HCT116 (cell line): ENCODE measurements at regions of chr1 and their contacts with region 1.

Region 1: DNA sequence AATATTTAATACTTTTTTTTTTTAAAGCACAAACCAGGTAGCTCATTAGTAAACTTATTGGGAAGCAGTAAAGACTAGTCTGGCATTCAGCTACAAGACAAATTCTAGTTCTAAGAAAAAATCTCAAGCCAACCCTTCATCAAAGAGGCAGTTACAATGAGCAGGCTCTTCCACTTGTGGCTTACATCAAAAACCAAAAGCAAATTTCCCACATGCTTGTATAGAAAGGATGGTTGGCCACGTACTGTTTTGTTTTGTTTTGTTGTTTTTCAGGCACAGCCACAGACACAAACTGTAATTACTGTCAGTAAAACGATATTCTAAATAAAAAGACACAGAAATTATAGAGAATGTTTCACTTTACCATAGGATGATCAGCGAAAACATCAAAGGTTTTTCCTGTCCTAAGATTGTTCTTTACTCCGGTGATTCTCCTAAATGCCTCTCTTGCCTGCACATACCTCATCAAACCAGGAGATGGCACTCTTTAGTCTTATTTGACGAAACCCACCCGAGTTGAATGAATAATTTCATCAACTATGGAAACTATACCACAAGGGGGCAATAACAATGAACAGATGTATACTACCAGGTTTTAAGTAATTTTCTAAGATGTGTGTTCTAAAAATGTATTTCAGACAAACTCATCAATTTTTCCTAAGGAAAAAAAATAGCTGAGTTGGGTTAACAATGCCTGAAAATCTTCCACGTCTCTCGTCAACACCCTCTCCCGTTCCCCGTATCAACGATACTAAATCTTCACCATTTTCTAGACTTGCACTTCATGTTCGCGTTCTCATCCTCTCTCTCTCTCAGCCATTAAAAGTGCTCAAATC is 26.9 kb downstream of the RPL5 start:
- DNase-seq: peak; percentile 67
- ATAC-seq: peak; percentile 93
- H3K4me3 ChIP-seq: no peak overlapping the region
- H3K27ac ChIP-seq: no peak overlapping the region
- H3K4me1 ChIP-seq: no peaks in the 10 kb centered on the region
- H3K27me3 ChIP-seq: no peaks in the 10 kb centered on the region
- CTCF ChIP-seq: peak; percentile 87 to 99 (median 99)
- POLR2A ChIP-seq: no peak
- RAD21 ChIP-seq: peak; percentile 98

Region 2: GRCh38 chr1:92051948-92052347 is 806.8 kb before region 1 on chr1:
- CTCF ChIA-PET with region 1: no interaction called
- POLR2A ChIA-PET with region 1: no interaction called
- RAD21 ChIA-PET with region 1: no interaction called
- intact Hi-C with region 1: no loop called
- DNase-seq: no peak
- ATAC-seq: no peak
- H3K4me3 ChIP-seq: no peak overlapping the region
- H3K27ac ChIP-seq: no peak overlapping the region
- H3K4me1 ChIP-seq: no peaks in the 10 kb centered on the region
- H3K27me3 ChIP-seq: no peaks in the 10 kb centered on the region
- CTCF ChIP-seq: no peak
- POLR2A ChIP-seq: no peak
- RAD21 ChIP-seq: no peak

Region 3: DNA sequence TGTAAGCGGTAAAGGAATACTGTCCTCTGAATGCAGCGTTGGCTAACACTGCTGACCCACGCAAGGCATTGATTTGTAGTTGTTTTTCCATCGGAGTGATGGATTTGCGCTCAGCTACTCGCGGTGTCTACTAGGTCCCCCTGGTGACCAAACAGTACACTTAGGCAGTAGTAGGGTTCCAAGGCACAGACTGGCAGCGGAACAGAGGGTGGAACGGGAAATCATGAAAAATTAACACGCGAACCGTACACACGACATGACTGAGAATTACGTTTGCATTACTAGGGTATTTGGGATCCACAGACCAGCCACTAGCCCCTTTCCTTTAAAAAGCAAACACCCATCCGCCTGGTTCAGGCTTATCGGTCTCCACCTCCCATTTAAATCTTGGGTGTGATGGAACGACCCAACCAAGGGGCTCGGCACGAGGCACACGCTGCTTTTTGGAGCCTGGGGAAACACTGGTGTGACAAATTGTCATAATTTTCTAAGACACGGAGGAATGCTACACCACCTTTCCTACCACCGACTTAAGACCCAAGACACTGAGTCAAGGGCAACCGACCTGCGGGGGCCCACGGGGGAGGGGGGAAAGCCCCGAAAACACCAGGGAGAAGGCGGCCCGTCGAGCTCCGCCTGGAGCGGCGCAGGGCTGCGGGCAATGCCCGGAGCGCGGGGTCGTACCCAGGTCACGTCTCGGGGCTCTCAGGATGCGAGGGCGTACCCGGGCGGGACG is 101.8 kb after region 1 on chr1:
- CTCF ChIA-PET with region 1: interaction called, 21 read pairs
- POLR2A ChIA-PET with region 1: no interaction called
- RAD21 ChIA-PET with region 1: interaction called in 1 of 2 experiments, 4 read pairs
- intact Hi-C with region 1: loop called (anchors 1 kb)
- DNase-seq: peak; percentile 70
- ATAC-seq: peak; percentile 74
- H3K4me3 ChIP-seq: peak overlapping the region; percentile 63 to 71
- H3K27ac ChIP-seq: peak overlapping the region; percentile 66
- H3K4me1 ChIP-seq: peaks cover 0 to 21% of the 10 kb centered on the region in 2 experiments; a peak in 2 of 4 replicates
- H3K27me3 ChIP-seq: no peaks in the 10 kb centered on the region
- CTCF ChIP-seq: peak; percentile 50 to 96 (median 58)
- POLR2A ChIP-seq: no peak
- RAD21 ChIP-seq: peak; percentile 88

Region 4: DNA sequence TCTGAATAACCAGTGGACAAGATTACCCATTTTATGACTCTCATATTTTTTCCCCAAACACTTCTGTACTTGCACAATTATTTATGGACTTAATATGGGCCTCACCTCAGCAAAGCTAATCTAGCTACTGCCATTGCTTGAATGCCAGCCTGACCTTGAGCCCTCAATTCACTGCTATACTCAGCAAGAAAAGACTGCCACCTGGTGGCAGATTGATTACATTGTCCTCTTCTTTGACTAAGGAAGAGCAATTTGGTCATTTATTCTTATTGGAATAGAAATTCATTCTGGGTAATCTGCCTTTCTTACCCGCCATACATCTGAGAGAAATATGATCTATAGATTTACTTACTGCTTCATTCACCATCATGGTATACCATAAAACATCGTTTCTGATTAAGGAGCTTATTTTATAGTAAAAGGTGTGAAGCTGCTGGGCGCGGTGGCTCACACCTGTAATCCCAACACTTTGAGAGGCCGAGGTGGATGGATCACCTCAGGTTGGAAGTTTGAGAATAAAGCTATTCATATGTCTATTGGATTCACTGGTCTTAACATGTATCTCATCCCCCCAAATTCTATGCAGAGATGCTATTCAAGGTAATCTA is 135.4 kb after region 1 on chr1:
- CTCF ChIA-PET with region 1: interaction called, 40 read pairs
- POLR2A ChIA-PET with region 1: no interaction called
- RAD21 ChIA-PET with region 1: interaction called in 1 of 2 experiments, 6 read pairs
- intact Hi-C with region 1: loop called (anchors 1 kb)
- DNase-seq: peak; percentile 75
- ATAC-seq: peak; percentile 92
- H3K4me3 ChIP-seq: no peak overlapping the region
- H3K27ac ChIP-seq: no peak overlapping the region
- H3K4me1 ChIP-seq: 0 out of 4 replicates have a peak, but pooled peaks cover 0 to 4% of the 10 kb centered on the region in 2 experiments
- H3K27me3 ChIP-seq: no peaks in the 10 kb centered on the region
- CTCF ChIP-seq: peak; percentile 66 to 97 (median 91)
- POLR2A ChIP-seq: no peak
- RAD21 ChIP-seq: peak; percentile 92

Region 5: DNA sequence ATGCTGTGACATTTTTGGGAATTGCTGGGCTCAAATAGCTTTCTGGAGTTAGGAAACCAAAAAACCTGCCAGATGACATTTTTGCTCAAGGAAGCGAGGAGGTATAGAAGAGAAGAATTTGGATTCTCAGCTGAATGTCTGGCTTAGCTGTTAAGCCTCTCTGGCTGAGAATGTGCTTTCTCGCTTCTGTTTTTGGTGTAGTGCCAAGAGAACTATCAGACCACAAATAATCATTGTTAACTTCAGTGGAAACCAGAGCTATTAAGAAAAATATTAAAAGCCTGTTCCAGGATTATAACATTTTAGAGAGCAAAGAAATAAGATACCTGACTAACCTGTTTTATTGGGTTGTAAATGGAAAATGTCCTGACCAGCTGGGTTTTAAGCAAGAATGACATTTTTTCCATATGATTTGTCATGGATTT is 142.0 kb after region 1 on chr1:
- CTCF ChIA-PET with region 1: interaction called, 13 read pairs
- POLR2A ChIA-PET with region 1: no interaction called
- RAD21 ChIA-PET with region 1: no interaction called
- intact Hi-C with region 1: no loop called
- DNase-seq: no peak
- ATAC-seq: no peak
- H3K4me3 ChIP-seq: no peak overlapping the region
- H3K27ac ChIP-seq: no peak overlapping the region
- H3K4me1 ChIP-seq: peaks cover 4 to 11% of the 10 kb centered on the region in 2 experiments; a peak in 3 of 4 replicates
- H3K27me3 ChIP-seq: 0 out of 2 replicates have a peak, but pooled peaks cover 4% of the 10 kb centered on the region
- CTCF ChIP-seq: no peak
- POLR2A ChIP-seq: no peak
- RAD21 ChIP-seq: no peak

Region 6: DNA sequence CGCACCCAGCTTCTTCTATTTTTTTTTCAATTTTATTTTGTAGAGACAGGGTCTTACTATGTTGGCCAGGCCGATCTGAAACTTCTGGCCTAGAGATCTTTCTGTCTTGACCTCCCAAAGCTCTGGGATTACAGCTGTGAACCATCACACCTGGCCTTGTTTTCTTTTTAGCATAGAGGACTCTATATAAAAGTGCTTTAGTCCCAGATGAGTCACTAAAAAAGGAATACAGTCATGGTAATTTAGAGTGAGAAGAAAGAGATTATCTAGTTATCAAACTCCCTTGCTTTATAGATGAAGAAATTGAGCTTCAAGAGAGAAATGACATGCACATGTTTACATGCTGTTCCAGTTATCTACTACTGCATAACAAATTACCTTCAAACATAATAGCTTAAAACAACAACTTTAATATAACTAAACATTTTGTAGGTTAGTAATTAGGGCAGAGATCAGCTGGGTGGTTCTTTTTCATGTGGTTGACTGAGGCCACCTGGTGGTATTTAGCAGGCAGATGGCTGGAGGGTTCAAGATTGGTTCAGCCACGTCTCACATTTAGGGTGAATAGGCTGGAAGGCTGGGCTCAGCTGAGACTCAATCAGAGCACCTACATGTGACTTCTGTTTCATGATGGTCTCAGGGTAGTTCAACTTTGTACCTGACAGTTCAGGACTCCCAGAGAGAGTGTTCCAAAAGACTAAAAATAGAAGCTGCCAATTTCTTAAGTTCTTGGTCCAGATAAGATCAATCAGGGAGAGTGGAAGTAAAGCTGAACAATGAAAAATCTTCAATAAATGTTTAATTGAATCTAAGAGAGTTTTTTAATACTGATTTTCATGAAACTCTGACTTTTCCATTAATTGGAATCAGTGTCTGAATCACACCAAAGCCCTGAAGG is 203.4 kb after region 1 on chr1:
- CTCF ChIA-PET with region 1: interaction called, 11 read pairs
- POLR2A ChIA-PET with region 1: no interaction called
- RAD21 ChIA-PET with region 1: no interaction called
- intact Hi-C with region 1: loop called (anchors 1 kb)
- DNase-seq: peak; percentile 47
- ATAC-seq: peak; percentile 96
- H3K4me3 ChIP-seq: no peak overlapping the region
- H3K27ac ChIP-seq: no peak overlapping the region
- H3K4me1 ChIP-seq: peaks cover 0 to 8% of the 10 kb centered on the region in 2 experiments; a peak in 2 of 4 replicates
- H3K27me3 ChIP-seq: no peaks in the 10 kb centered on the region; the same call in 1 of the 2 replicates
- CTCF ChIP-seq: peak; percentile 65 to 84 (median 69)
- POLR2A ChIP-seq: no peak
- RAD21 ChIP-seq: peak; percentile 85